CD4-positive, alpha-beta memory T cell (primary cell): ENCODE measurements at regions of chr11 and their contacts with region 1.

Region 1: DNA sequence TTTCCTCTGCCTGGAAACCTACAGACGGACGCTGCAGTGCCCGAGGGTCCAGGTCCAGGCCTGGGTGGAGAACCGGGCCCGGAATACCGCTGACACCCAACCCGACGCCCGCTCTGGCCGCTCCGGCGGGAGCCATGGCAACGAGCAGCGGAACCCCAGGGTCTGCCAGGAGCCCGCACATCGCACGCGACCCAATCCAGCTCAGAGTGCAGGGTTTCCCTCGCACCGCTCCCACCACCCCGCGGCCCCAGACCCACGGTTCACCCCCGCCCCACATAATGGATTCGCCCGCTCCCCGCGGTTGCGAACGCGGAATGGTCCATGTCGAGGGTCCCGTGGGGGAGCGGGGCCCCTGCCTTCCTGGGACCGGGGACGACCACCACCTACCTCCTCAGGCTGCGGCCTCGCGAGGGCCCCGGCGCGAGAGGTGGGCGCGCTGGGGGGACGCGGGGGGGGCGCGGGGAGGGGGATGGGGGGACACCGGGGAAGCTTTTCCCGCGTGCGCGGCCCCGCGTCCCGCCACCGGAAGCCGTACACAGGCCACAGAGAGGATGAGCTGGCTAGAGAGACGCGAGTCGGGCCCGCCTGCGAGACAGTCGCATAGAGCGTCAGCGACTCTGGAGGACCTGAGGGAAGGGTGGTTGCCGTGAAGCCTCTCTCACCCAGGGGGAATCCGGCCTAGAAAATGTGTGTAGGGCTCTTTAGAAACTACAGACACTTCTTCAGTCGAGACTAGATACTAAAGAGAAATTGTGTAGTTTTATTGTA is at the start of gene SSRP1:
- DNase-seq: peak; percentile 87 to 92 (median 88)
- H3K4me3 ChIP-seq: peak within 1 kb of the TSS; percentile 55 to 87
- H3K4me3 Mint-ChIP-seq: peak within 1 kb of the TSS; percentile 86 to 98 (median 94)
- H3K27ac ChIP-seq: peak within 1 kb of the TSS; percentile 85
- H3K27ac Mint-ChIP-seq: peak within 1 kb of the TSS; percentile 96 to 99 (median 98)
- H3K4me1 ChIP-seq: peaks cover 25% of the 10 kb centered on the region
- H3K4me1 Mint-ChIP-seq: peaks cover 23 to 29% (median 25%) of the 10 kb centered on the region in 4 donors
- H3K27me3 ChIP-seq: no peaks in the 10 kb centered on the region
- H3K27me3 Mint-ChIP-seq: no peaks in the 10 kb centered on the region
- total RNA-seq, gene SSRP1: 69.0 to 74.3 TPM

Region 2: GRCh38 chr11:57426929-57427726 is 91.6 kb after region 1 on chr11 and contains the start of gene SLC43A3:
- CTCF ChIA-PET with region 1: no interaction called
- POLR2A ChIA-PET with region 1: interaction called, 13 read pairs
- intact Hi-C with region 1: no loop called
- DNase-seq: peak; percentile 36 to 62 (median 37)
- H3K4me3 ChIP-seq: peak within 1 kb of the TSS; percentile 32 to 58
- H3K4me3 Mint-ChIP-seq: peak within 1 kb of the TSS; percentile 83 to 93 (median 88)
- H3K27ac ChIP-seq: peak within 1 kb of the TSS; percentile 45
- H3K27ac Mint-ChIP-seq: peak within 1 kb of the TSS; percentile 78 to 94 (median 90)
- H3K4me1 ChIP-seq: peaks cover 34% of the 10 kb centered on the region
- H3K4me1 Mint-ChIP-seq: peaks cover 33 to 56% (median 40%) of the 10 kb centered on the region in 4 donors
- H3K27me3 ChIP-seq: no peaks in the 10 kb centered on the region
- H3K27me3 Mint-ChIP-seq: no peaks in the 10 kb centered on the region
- total RNA-seq, gene SLC43A3: 15.1 to 15.6 TPM